ENCODE measurements at regions of chr5 and their contacts with region 1.

Region 1: GRCh38 chr5:16690243-16690852 is 73.6 kb upstream of the RETREG1 start:
- DNase-seq: peak; percentile 54 to 76
- H3K4me3 ChIP-seq: no peak overlapping the region
- H3K4me3 Mint-ChIP-seq: no peak overlapping the region
- H3K27ac Mint-ChIP-seq: peak overlapping the region; percentile 13
- H3K4me1 ChIP-seq: no peaks in the 10 kb centered on the region
- H3K4me1 Mint-ChIP-seq: no peaks in the 10 kb centered on the region
- H3K27me3 ChIP-seq: no peaks in the 10 kb centered on the region
- H3K27me3 Mint-ChIP-seq: no peaks in the 10 kb centered on the region
- CTCF ChIP-seq: peak; percentile 79 to 81

Region 2: DNA sequence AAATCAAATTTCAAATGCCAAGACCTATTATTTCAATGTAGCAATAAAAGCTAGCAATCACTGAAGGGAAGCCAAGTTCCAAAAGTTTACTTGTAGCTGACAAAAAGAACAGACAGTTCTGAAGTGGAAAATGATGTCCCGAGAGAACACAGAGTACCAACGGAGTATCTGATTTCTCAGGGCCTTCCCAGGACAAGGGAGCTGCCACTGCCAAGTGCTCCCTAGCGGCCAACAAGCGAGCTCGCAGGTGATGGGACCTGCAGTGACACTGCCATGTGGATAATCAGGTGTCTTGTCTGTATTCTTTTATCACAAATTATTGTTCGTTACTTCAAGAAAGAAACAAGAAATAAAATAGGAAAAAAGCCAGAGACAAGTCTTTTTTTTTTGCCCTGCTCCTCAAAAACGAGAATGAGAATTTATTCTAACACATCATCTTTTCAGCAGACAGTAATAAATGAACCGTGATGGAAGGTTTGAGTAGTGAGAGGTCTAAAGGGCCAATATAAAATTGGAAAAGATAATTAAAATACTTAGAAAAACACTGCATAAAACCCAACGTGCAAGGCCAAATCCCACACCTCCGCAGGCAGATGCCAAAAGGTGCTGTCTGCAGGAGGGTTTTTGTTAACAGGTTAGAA is 86.4 kb after region 1 on chr5:
- CTCF ChIA-PET with region 1: interaction called, 4 read pairs
- POLR2A ChIA-PET with region 1: no interaction called
- intact Hi-C with region 1: loop called (anchors 1 kb)
- DNase-seq: peak in 1 of 2 experiments; percentile 13
- H3K4me3 ChIP-seq: no peak overlapping the region
- H3K4me3 Mint-ChIP-seq: no peak overlapping the region
- H3K27ac Mint-ChIP-seq: no peak overlapping the region
- H3K4me1 ChIP-seq: no peaks in the 10 kb centered on the region
- H3K4me1 Mint-ChIP-seq: no peaks in the 10 kb centered on the region
- H3K27me3 ChIP-seq: no peaks in the 10 kb centered on the region
- H3K27me3 Mint-ChIP-seq: no peaks in the 10 kb centered on the region
- CTCF ChIP-seq: peak in 1 of 2 experiments; percentile 26